MCF 10A (cell line): ENCODE measurements at regions of chr12 and their contacts with region 1.

Region 1: DNA sequence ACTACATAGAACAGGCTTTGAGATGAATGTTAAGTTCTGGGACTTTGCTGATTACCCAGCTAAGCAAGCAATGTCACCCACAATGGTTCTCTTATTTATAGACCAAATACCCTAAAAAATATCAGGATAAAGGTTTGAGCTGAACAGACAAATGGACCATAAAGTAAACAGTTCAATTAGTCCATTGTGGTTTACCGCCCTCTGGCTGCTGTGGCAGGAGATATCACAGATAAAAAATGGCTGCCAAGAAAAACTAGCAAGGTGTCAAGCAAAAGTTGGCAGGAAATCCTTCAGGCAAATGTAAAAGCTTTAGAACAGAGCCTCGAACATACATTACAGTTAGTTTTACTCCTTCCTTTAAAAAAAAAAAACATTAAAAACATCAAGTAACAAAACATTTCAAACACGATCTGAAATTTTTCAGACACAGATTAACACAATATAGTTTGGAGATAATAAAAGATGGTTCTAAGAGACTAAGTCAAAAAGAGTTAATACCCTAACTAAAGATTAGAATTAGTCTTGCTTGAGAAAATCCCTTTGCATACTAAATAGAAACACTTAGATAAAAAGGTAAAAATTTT is 41.3 kb downstream of the MED13L start:
- DNase-seq: peak; percentile 74
- H3K4me3 Mint-ChIP-seq: no peak overlapping the region
- H3K27ac Mint-ChIP-seq: no peak overlapping the region
- H3K4me1 Mint-ChIP-seq: peaks cover 7% of the 10 kb centered on the region
- H3K27me3 Mint-ChIP-seq: no peaks in the 10 kb centered on the region
- CTCF ChIP-seq: peak; percentile 72

Region 2: GRCh38 chr12:115998119-115998633 is 238.1 kb before region 1 on chr12:
- CTCF ChIA-PET with region 1: interaction called, 17 read pairs
- POLR2A ChIA-PET with region 1: interaction called, 3 read pairs
- intact Hi-C with region 1: loop called (anchors 5 kb)
- DNase-seq: peak; percentile 56
- H3K4me3 Mint-ChIP-seq: no peak overlapping the region
- H3K27ac Mint-ChIP-seq: no peak overlapping the region
- H3K4me1 Mint-ChIP-seq: no peaks in the 10 kb centered on the region
- H3K27me3 Mint-ChIP-seq: no peaks in the 10 kb centered on the region
- CTCF ChIP-seq: peak; percentile 63

Region 3: DNA sequence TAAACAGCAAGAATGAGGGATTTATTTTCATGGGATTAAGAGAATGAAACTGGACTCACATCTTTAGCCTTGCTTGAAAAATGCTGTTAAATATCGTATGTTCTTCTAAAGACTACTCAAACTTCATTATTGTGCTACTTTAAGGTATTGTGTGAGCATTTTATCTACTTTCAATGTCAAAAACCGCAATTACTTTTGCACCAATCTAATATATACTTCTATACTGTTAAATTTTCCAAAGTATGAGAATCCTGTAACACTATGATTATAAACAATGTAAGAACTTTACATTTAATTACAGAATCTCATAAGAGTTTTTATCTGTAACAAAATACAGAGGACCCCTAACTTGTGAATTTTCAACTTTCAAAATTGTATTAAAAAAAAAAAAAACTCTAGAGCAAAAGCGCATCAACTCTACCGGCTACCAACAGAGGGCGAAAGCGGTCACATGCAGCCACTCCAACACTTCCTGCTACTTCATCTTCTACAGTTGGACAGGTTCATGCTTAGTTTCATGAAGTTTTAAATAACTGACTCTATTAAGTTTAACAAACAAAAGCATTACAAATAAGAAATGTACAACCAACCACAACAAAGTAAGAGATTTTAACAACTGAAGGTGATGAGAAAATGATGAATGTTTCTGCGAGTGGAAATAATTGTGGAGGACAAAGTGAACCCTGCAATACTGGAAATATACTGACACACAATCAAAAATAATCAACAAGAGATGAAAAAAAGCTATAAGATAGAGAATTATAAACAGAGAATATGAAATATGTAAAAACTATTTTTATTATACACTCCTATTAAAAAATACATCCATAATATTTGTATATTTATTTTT is 169.6 kb before region 1 on chr12:
- CTCF ChIA-PET with region 1: interaction called, 5 read pairs
- POLR2A ChIA-PET with region 1: interaction called, 3 read pairs
- intact Hi-C with region 1: loop called (anchors 1 kb)
- DNase-seq: peak; percentile 55
- H3K4me3 Mint-ChIP-seq: no peak overlapping the region
- H3K27ac Mint-ChIP-seq: no peak overlapping the region
- H3K4me1 Mint-ChIP-seq: peaks cover 18% of the 10 kb centered on the region
- H3K27me3 Mint-ChIP-seq: no peaks in the 10 kb centered on the region
- CTCF ChIP-seq: peak; percentile 70

Region 4: GRCh38 chr12:116142936-116143898 is 93.0 kb before region 1 on chr12:
- CTCF ChIA-PET with region 1: interaction called, 33 read pairs
- POLR2A ChIA-PET with region 1: interaction called, 6 read pairs
- intact Hi-C with region 1: loop called (anchors 1 kb)
- DNase-seq: peak; percentile 55
- H3K4me3 Mint-ChIP-seq: peak overlapping the region; percentile 27
- H3K27ac Mint-ChIP-seq: peak overlapping the region; percentile 86
- H3K4me1 Mint-ChIP-seq: peaks cover 50% of the 10 kb centered on the region
- H3K27me3 Mint-ChIP-seq: no peaks in the 10 kb centered on the region
- CTCF ChIP-seq: no peak

Region 5: DNA sequence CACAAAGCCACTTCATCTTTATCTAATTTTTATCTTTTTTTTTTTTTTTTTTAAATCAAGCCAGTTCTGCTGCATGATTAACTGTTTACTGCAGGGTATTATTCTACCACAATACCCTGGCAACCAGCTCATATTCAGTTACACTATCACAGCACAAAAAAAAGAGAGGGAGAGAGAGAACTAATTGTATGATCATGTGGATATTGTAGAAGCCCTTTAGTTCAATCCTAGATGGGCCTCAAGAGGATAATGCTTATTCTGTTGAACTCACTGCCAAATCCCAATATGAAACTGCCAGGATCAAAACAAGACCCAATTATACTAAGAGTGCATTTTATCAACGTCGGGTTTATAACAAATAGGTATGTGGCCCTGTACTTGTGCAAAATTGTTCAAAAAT is 10.2 kb before region 1 on chr12:
- CTCF ChIA-PET with region 1: interaction called, 25 read pairs
- POLR2A ChIA-PET with region 1: no interaction called
- intact Hi-C with region 1: no loop called
- DNase-seq: no peak
- H3K4me3 Mint-ChIP-seq: no peak overlapping the region
- H3K27ac Mint-ChIP-seq: no peak overlapping the region
- H3K4me1 Mint-ChIP-seq: peaks cover 7% of the 10 kb centered on the region
- H3K27me3 Mint-ChIP-seq: no peaks in the 10 kb centered on the region
- CTCF ChIP-seq: no peak

Region 6: DNA sequence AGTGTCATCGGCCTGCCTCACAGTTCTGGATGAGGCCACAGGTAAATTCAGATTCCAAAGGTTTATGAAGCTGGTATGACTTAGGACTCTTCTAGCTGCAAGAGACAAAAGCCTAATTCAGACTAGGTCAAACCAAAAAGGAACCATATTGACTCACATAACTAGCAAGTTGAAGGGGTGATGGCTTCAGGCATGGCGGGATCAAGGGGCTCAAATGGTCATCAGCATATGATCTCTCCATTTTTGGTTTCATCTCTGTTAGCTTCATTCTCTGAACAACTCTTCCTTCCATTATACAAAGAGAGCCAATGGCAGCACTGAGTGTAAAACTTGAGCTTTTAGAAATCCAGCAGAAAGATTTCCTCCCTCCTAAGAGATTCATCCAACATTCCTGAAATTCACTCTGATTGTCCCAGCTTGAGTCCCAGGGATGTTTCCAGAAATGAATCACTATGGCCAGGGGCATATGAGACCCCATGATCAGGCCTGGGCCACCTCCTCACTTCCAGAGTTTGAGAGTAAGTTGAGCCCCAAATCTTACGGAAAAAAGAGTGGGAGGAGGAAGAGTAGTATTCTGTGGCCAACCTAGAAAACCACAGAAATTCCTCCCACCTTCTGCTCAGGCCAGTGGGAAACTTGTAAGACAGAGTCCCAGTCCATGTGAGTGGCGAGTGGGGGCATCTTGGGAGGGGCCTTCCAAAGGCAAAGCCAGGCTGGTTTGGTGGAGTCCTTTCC is 320.9 kb after region 1 on chr12:
- CTCF ChIA-PET with region 1: no interaction called
- POLR2A ChIA-PET with region 1: no interaction called
- intact Hi-C with region 1: no loop called
- DNase-seq: no peak
- H3K4me3 Mint-ChIP-seq: no peak overlapping the region
- H3K27ac Mint-ChIP-seq: no peak overlapping the region
- H3K4me1 Mint-ChIP-seq: peaks cover 11% of the 10 kb centered on the region
- H3K27me3 Mint-ChIP-seq: no peaks in the 10 kb centered on the region
- CTCF ChIP-seq: no peak

Region 7: GRCh38 chr12:116599285-116600136 is 363.3 kb after region 1 on chr12:
- CTCF ChIA-PET with region 1: interaction called, 5 read pairs
- POLR2A ChIA-PET with region 1: no interaction called
- intact Hi-C with region 1: loop called (anchors 5 kb)
- DNase-seq: peak; percentile 57
- H3K4me3 Mint-ChIP-seq: no peak overlapping the region
- H3K27ac Mint-ChIP-seq: no peak overlapping the region
- H3K4me1 Mint-ChIP-seq: no peaks in the 10 kb centered on the region
- H3K27me3 Mint-ChIP-seq: no peaks in the 10 kb centered on the region
- CTCF ChIP-seq: peak; percentile 71